A673 (cell line): ENCODE measurements at regions of chrX and their contacts with region 1.

Region 1: GRCh38 chrX:102768987-102769761 is 48.6 kb downstream of the GPRASP3 start:
- DNase-seq: peak; percentile 89
- H3K4me3 ChIP-seq: peak overlapping the region; percentile 68
- H3K27ac ChIP-seq: peak overlapping the region; percentile 82
- H3K4me1 ChIP-seq: no peaks in the 10 kb centered on the region
- H3K27me3 ChIP-seq: no peaks in the 10 kb centered on the region
- CTCF ChIP-seq: no peak

Region 2: DNA sequence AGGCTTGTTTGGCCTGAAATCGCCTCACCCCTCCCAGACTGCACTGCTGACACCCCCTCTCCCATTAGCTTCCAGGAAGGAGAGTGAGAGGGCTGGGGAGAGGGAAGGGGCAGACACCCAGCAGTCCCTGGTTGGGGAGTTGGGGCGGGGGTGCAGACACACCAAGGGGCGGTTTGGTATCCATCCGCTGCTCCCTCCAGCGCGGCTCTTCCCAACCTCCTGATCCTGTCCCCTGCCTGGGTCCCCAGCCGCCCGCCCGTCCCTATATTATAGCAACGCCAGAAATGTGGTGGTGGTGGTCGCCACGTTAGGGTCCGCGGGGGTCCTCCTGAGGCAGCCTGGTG is 23.7 kb before region 1 on chrX:
- CTCF ChIA-PET with region 1: interaction called, 11 read pairs
- POLR2A ChIA-PET with region 1: no interaction called
- intact Hi-C with region 1: no loop called
- DNase-seq: no peak
- H3K4me3 ChIP-seq: peak overlapping the region; percentile 34
- H3K27ac ChIP-seq: no peak overlapping the region
- H3K4me1 ChIP-seq: no peaks in the 10 kb centered on the region
- H3K27me3 ChIP-seq: no peaks in the 10 kb centered on the region
- CTCF ChIP-seq: no peak

Region 3: GRCh38 chrX:104488811-104489210 is 1719.6 kb after region 1 on chrX:
- CTCF ChIA-PET with region 1: no interaction called
- POLR2A ChIA-PET with region 1: no interaction called
- intact Hi-C with region 1: no loop called
- DNase-seq: no peak
- H3K4me3 ChIP-seq: no peak overlapping the region
- H3K27ac ChIP-seq: no peak overlapping the region
- H3K4me1 ChIP-seq: no peaks in the 10 kb centered on the region
- H3K27me3 ChIP-seq: peaks cover 12% of the 10 kb centered on the region
- CTCF ChIP-seq: no peak